GM12878 (cell line): ENCODE measurements at regions of chr4 and their contacts with region 1.

Region 1: GRCh38 chr4:173270312-173271027 is 63.7 kb downstream of the HMGB2 start:
- DNase-seq: no peak
- ATAC-seq: no peak
- H3K4me3 ChIP-seq: no peak overlapping the region
- H3K27ac ChIP-seq: no peak overlapping the region
- H3K4me1 ChIP-seq: no peaks in the 10 kb centered on the region
- H3K27me3 ChIP-seq: no peaks in the 10 kb centered on the region
- CTCF ChIP-seq: no peak
- EP300 ChIP-seq: no peak
- POLR2A ChIP-seq: no peak
- RAD21 ChIP-seq: no peak

Region 2: GRCh38 chr4:173025131-173025530 is 245.3 kb before region 1 on chr4:
- CTCF ChIA-PET with region 1: interaction called, 8 read pairs
- POLR2A ChIA-PET with region 1: no interaction called
- RAD21 ChIA-PET with region 1: no interaction called
- SMC1A ChIA-PET with region 1: interaction called, 10 read pairs
- in situ Hi-C with region 1: no loop called
- intact Hi-C with region 1: no loop called
- DNase-seq: peak; percentile 16
- ATAC-seq: peak; percentile 95
- H3K4me3 ChIP-seq: no peak overlapping the region
- H3K27ac ChIP-seq: no peak overlapping the region
- H3K4me1 ChIP-seq: no peaks in the 10 kb centered on the region
- H3K27me3 ChIP-seq: no peaks in the 10 kb centered on the region; a peak in 1 of 4 replicates
- CTCF ChIP-seq: peak; percentile 54 to 63 (median 58); a peak in 5 of 6 replicates
- EP300 ChIP-seq: no peak
- POLR2A ChIP-seq: no peak
- RAD21 ChIP-seq: peak; percentile 91

Region 3: DNA sequence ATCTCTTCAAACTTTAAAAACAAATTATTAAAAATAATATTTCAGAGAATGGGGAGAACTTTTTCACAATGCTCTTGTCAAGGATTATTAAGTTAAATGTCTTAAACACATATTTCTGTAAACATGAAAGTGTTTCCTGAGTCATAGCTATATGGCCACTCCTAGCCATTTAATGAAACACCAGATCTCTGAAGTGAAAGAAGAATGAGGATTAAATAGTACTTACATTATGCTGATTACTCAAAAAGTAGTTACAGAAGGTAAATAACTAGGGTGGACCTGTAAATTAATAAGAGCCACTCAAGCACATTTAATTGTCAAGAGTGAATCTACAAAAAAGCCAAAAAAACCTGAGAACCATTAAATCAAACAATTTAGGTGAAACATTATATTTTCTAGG is 159.4 kb before region 1 on chr4:
- CTCF ChIA-PET with region 1: no interaction called
- POLR2A ChIA-PET with region 1: no interaction called
- RAD21 ChIA-PET with region 1: no interaction called
- SMC1A ChIA-PET with region 1: no interaction called
- in situ Hi-C with region 1: no loop called
- intact Hi-C with region 1: no loop called
- DNase-seq: no peak
- ATAC-seq: no peak
- H3K4me3 ChIP-seq: no peak overlapping the region
- H3K27ac ChIP-seq: no peak overlapping the region
- H3K4me1 ChIP-seq: no peaks in the 10 kb centered on the region
- H3K27me3 ChIP-seq: no peaks in the 10 kb centered on the region
- CTCF ChIP-seq: no peak
- EP300 ChIP-seq: no peak
- POLR2A ChIP-seq: no peak
- RAD21 ChIP-seq: no peak

Region 4: DNA sequence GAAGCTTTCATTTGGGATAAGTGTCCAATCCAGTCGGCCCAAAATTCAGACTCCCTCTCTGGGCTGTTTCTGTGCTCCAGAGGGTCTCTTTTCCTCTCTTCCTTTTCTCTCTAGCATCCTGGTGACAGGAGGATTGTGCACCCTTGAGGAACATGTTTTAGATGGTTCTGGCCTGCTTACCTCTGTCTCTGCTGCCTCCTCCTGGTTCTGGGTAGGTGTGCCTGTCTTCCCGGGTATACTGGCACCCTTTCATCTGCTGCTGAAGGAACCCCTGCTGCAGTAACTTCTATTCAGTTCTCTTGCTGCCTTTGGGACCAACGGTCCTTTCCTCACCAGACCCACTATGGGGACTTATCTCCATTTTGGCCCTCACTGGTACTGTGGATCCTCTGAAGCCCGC is 10.5 kb after region 1 on chr4:
- CTCF ChIA-PET with region 1: interaction called, 30 read pairs
- POLR2A ChIA-PET with region 1: interaction called, 3 read pairs
- RAD21 ChIA-PET with region 1: no interaction called
- SMC1A ChIA-PET with region 1: interaction called, 17 read pairs
- in situ Hi-C with region 1: no loop called
- intact Hi-C with region 1: no loop called
- DNase-seq: no peak
- ATAC-seq: peak; percentile 47; the same call in 2 of the 3 replicates
- H3K4me3 ChIP-seq: no peak overlapping the region
- H3K27ac ChIP-seq: no peak overlapping the region
- H3K4me1 ChIP-seq: no peaks in the 10 kb centered on the region
- H3K27me3 ChIP-seq: no peaks in the 10 kb centered on the region
- CTCF ChIP-seq: peak; percentile 15 to 17 (median 16); a peak in 2 of 6 replicates
- EP300 ChIP-seq: no peak
- POLR2A ChIP-seq: no peak
- RAD21 ChIP-seq: peak; percentile 36

Region 5: DNA sequence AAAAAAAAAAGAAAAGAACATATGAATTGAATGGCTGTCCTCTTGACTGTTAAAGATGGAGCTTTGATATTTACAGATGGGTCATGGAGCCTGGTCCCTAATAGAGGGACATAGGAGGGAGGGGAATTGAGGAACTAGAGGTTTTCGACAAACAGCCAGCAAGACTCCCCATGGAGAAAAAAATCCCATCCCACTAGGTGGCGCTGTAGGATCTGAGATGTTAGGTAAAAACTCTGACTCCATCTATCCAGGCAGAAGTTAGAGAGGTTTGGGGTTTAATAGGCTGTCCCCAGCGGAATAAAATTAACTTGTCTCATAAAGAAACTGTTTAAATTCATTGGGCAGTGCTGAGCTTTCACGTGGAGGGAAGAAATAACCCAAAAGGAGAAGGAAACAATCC is 17.8 kb after region 1 on chr4:
- CTCF ChIA-PET with region 1: interaction called, 30 read pairs
- POLR2A ChIA-PET with region 1: no interaction called
- RAD21 ChIA-PET with region 1: no interaction called
- SMC1A ChIA-PET with region 1: interaction called, 4 read pairs
- in situ Hi-C with region 1: no loop called
- intact Hi-C with region 1: no loop called
- DNase-seq: peak; percentile 24
- ATAC-seq: peak; percentile 88
- H3K4me3 ChIP-seq: no peak overlapping the region
- H3K27ac ChIP-seq: no peak overlapping the region
- H3K4me1 ChIP-seq: peaks cover 5% of the 10 kb centered on the region; the same call in 1 of the 2 replicates
- H3K27me3 ChIP-seq: no peaks in the 10 kb centered on the region
- CTCF ChIP-seq: peak; percentile 60 to 67 (median 65)
- EP300 ChIP-seq: no peak
- POLR2A ChIP-seq: no peak
- RAD21 ChIP-seq: peak; percentile 63